Activated naive CD4-positive, alpha-beta T cell treated with anti-CD3 and anti-CD28 coated beads for 36 hours (primary cell): ENCODE measurements at regions of chr4 and their contacts with region 1.

Region 1: GRCh38 chr4:15231265-15232091 is 196.4 kb upstream of the C1QTNF7 start:
- DNase-seq: peak; percentile 89
- H3K4me3 Mint-ChIP-seq: no peak overlapping the region
- H3K27ac Mint-ChIP-seq: no peak overlapping the region
- H3K4me1 Mint-ChIP-seq: peaks cover 27% of the 10 kb centered on the region
- H3K27me3 Mint-ChIP-seq: no peaks in the 10 kb centered on the region

Region 2: DNA sequence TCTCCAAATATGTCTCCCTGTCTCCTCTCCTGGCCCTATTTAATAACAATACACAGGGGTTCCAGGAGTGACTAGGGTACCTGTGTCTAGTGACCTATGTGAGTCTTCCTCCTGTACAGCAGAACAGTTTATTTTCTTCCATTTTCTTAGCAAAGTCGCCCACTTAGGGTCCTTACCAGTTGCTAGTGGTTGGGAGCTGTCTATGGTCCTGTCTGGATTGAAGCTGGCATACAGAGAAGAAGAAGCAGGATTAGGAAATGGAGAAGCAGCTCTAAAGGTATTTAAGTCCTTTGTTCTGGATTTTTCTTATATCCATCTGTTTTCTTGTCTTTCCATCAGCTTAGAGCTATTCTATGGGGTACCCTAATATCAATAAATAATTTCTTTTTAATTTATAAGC is 816.3 kb before region 1 on chr4:
- CTCF ChIA-PET with region 1: no interaction called
- intact Hi-C with region 1: no loop called
- DNase-seq: no peak
- H3K4me3 Mint-ChIP-seq: no peak overlapping the region
- H3K27ac Mint-ChIP-seq: no peak overlapping the region
- H3K4me1 Mint-ChIP-seq: no peaks in the 10 kb centered on the region
- H3K27me3 Mint-ChIP-seq: no peaks in the 10 kb centered on the region

Region 3: GRCh38 chr4:15117270-15117946 is 114.1 kb before region 1 on chr4:
- CTCF ChIA-PET with region 1: no interaction called
- intact Hi-C with region 1: loop called (anchors 2 kb)
- DNase-seq: peak; percentile 13
- H3K4me3 Mint-ChIP-seq: no peak overlapping the region
- H3K27ac Mint-ChIP-seq: no peak overlapping the region
- H3K4me1 Mint-ChIP-seq: peaks cover 11% of the 10 kb centered on the region
- H3K27me3 Mint-ChIP-seq: peaks cover 24% of the 10 kb centered on the region

Region 4: DNA sequence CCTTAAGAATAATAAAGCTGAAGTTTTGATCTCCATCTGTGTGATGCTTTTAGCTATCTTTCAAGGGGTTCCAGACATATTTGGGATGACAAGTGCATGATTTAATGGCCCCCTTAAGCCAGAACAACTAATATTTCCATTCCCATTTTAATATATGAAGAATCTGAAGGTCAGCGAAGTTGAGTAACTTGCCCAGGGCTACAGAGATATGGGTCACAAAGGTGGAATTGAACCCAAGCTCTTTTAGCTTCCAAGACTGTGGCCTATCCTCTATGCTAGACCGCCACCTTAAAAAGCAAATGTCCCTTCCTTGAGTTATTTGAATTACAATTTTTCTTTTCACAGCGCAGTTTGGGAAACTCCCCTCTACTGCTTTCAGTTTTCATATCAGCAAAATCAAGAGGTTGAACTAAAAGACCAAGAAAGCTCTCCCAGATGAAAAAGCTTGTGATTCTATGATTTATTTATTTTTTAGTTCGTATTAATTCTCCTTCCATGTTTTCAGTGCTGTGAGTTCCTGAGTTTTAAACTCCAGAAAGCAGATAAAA is 21.8 kb after region 1 on chr4:
- CTCF ChIA-PET with region 1: interaction called, 8 read pairs
- intact Hi-C with region 1: loop called (anchors 1 kb)
- DNase-seq: no peak
- H3K4me3 Mint-ChIP-seq: no peak overlapping the region
- H3K27ac Mint-ChIP-seq: no peak overlapping the region
- H3K4me1 Mint-ChIP-seq: no peaks in the 10 kb centered on the region
- H3K27me3 Mint-ChIP-seq: no peaks in the 10 kb centered on the region

Region 5: GRCh38 chr4:15396157-15396800 is 164.8 kb after region 1 on chr4:
- CTCF ChIA-PET with region 1: interaction called, 134 read pairs
- intact Hi-C with region 1: loop called (anchors 1 kb)
- DNase-seq: peak; percentile 79
- H3K4me3 Mint-ChIP-seq: no peak overlapping the region
- H3K27ac Mint-ChIP-seq: no peak overlapping the region
- H3K4me1 Mint-ChIP-seq: peaks cover 26% of the 10 kb centered on the region
- H3K27me3 Mint-ChIP-seq: no peaks in the 10 kb centered on the region

Region 6: GRCh38 chr4:15457406-15458201 is 226.1 kb after region 1 on chr4:
- CTCF ChIA-PET with region 1: interaction called, 69 read pairs
- intact Hi-C with region 1: loop called (anchors 1 kb)
- DNase-seq: no peak
- H3K4me3 Mint-ChIP-seq: no peak overlapping the region
- H3K27ac Mint-ChIP-seq: no peak overlapping the region
- H3K4me1 Mint-ChIP-seq: peaks cover 6% of the 10 kb centered on the region
- H3K27me3 Mint-ChIP-seq: no peaks in the 10 kb centered on the region

Region 7: GRCh38 chr4:15756361-15756861 is 524.9 kb after region 1 on chr4:
- CTCF ChIA-PET with region 1: no interaction called
- intact Hi-C with region 1: loop called (anchors 10 kb)
- DNase-seq: peak; percentile 89
- H3K4me3 Mint-ChIP-seq: peak overlapping the region; percentile 54
- H3K27ac Mint-ChIP-seq: peak overlapping the region; percentile 83
- H3K4me1 Mint-ChIP-seq: peaks cover 44% of the 10 kb centered on the region
- H3K27me3 Mint-ChIP-seq: no peaks in the 10 kb centered on the region

Region 8: GRCh38 chr4:16001484-16001858 is 770.0 kb after region 1 on chr4:
- CTCF ChIA-PET with region 1: no interaction called
- intact Hi-C with region 1: loop called (anchors 5 kb)
- DNase-seq: peak; percentile 67
- H3K4me3 Mint-ChIP-seq: no peak overlapping the region
- H3K27ac Mint-ChIP-seq: no peak overlapping the region
- H3K4me1 Mint-ChIP-seq: no peaks in the 10 kb centered on the region
- H3K27me3 Mint-ChIP-seq: no peaks in the 10 kb centered on the region